Activated naive CD4-positive, alpha-beta T cell treated with anti-CD3 and anti-CD28 coated beads for 36 hours (primary cell): ENCODE measurements at regions of chr17 and their contacts with region 1.

Region 1: DNA sequence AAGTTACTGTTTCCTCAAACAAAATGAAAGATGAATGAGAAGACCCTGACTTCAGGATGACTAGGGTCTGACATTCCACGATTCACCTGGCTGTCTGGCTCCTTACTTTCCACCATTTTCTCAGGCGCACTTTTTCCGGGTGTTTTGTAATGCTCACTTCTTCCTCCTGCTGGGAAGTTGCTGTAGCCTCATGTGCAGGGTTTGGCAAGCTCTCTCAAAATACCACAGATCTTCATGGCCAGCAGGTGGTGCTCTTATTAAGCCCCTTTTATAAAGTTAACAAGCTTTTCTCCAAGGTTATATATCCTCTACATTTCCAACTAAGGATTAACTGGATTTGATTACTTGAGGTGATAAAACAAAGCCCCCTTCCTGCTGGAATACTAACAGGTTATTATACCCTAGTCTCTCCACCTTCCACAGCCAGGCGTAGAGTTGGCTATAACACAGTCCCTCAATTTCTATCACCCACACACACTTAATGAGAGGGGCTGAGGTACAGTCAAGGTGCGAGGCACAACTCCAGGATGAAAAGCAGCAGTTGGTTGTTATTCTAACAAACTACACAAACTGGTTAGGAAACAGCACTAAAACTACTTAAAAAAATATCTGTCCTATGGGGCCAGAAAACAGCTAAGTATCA is 45.4 kb downstream of the STH start:
- DNase-seq: peak; percentile 82
- H3K4me3 Mint-ChIP-seq: no peak overlapping the region
- H3K27ac Mint-ChIP-seq: no peak overlapping the region
- H3K4me1 Mint-ChIP-seq: peaks cover 11% of the 10 kb centered on the region
- H3K27me3 Mint-ChIP-seq: no peaks in the 10 kb centered on the region

Region 2: DNA sequence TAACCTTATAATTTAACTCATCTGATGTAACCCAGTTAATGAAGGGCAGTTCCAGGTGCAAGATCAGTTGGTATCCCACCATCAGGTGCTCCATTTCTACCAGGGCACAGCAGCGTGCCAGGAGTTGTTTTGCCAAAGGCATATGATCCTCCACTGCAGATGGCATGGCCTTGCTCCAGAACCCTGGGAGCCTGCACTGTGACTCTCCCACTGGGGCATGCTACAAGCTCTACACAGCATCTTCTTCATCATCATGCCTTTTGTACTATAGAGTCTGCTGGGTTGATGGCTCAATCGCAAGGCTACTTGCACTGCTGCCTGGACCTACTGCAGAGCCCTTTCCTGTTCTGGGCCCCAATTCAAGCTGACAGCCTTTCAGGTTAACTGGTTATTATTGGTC is 161.3 kb before region 1 on chr17:
- CTCF ChIA-PET with region 1: no interaction called
- intact Hi-C with region 1: no loop called
- DNase-seq: no peak
- H3K4me3 Mint-ChIP-seq: no peak overlapping the region
- H3K27ac Mint-ChIP-seq: no peak overlapping the region
- H3K4me1 Mint-ChIP-seq: peaks cover 2% of the 10 kb centered on the region
- H3K27me3 Mint-ChIP-seq: no peaks in the 10 kb centered on the region

Region 3: DNA sequence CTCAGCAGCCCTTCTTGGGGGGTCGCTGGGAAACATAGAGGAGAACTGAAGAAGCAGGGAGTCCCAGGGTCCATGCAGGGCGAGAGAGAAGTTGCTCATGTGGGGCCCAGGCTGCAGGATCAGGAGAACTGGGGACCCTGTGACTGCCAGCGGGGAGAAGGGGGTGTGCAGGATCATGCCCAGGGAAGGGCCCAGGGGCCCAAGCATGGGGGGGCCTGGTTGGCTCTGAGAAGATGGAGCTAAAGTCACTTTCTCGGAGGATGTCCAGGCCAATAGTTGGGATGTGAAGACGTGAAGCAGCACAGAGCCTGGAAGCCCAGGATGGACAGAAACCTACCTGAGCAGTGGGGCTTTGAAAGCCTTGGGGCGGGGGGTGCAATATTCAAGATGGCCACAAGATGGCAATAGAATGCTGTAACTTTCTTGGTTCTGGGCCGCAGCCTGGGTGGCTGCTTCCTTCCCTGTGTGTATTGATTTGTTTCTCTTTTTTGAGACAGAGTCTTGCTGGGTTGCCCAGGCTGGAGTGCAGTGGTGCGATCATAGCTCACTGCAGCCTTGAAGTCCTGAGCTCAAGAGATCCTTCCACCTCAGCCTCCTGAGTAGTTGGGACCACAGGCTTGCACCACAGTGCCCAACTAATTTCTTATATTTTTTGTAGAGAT is 42.0 kb before region 1 on chr17:
- CTCF ChIA-PET with region 1: interaction called, 9 read pairs
- intact Hi-C with region 1: loop called (anchors 1 kb)
- DNase-seq: peak; percentile 82
- H3K4me3 Mint-ChIP-seq: no peak overlapping the region
- H3K27ac Mint-ChIP-seq: no peak overlapping the region
- H3K4me1 Mint-ChIP-seq: no peaks in the 10 kb centered on the region
- H3K27me3 Mint-ChIP-seq: no peaks in the 10 kb centered on the region

Region 4: GRCh38 chr17:46056800-46057304 is 12.4 kb after region 1 on chr17:
- CTCF ChIA-PET with region 1: interaction called, 18 read pairs
- intact Hi-C with region 1: no loop called
- DNase-seq: no peak
- H3K4me3 Mint-ChIP-seq: no peak overlapping the region
- H3K27ac Mint-ChIP-seq: no peak overlapping the region
- H3K4me1 Mint-ChIP-seq: peaks cover 49% of the 10 kb centered on the region
- H3K27me3 Mint-ChIP-seq: no peaks in the 10 kb centered on the region